Right lobe of liver (tissue), 6 donors: ENCODE measurements at regions of chr7 and their contacts with region 1.

Region 1: DNA sequence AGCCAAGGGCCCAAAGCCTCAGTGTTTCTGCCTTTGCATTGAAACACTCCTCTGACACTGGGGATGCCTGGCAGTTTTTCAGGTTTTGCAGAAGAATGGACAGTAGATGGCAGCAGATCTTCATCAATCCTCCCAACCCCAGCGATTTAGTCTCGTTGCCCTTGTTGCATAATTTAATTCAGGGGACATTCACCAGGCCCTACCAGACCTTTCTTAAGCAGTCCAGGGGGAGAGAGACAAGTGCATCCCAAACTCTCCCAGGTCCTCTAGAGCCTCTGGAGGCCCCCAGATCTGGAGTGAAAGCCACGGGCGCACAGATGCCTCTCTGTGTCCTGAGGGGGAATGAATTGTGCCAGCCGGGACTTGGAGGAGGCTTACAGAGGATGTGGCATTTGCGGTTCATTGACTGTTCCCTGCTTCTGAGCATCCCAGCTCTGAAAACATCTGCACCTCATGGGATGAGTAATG is 29.6 kb downstream of the MINDY4 start:
- DNase-seq: peak in 1 of 3 donors; percentile 60
- ATAC-seq: peak; percentile 86 to 96 (median 90)
- H3K4me3 ChIP-seq: no peak overlapping the region
- H3K27ac ChIP-seq: no peak overlapping the region
- H3K4me1 ChIP-seq: peaks cover 0 to 13% (median 3%) of the 10 kb centered on the region in 4 donors
- H3K27me3 ChIP-seq: no peaks in the 10 kb centered on the region
- CTCF ChIP-seq: peak; percentile 62 to 78 (median 69)
- POLR2A ChIP-seq: no peak

Region 2: DNA sequence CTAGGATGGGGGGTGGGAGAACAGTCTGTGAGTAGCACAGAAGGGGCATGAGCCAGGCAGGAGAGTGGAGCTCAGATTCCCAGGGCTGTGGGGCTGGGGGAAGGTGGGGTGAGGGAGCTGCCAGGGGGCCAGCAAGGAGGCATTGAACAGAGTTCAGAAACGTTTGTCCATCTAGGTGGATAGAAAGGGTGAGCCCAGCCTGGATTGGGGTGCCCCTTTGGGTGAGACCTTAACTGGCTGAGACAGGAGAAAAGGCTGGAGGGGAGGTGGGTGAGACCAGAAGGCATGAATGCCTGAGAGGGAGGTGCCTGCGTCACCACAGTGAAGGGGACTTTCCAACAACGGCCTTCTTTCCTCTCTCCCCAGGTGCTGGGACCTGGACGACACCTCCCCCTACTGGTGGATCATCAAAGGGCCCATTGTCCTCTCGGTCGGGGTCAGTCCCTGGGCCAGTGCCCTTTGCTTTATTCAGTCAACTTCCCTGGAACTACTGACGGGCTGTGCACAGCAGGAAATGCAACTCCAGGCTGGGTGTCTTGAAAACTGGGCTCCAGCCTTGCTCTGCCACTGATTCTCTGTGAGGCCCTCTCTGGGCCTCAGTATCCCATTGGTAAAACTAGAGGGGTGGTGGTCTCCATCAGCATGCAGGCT is 173.9 kb after region 1 on chr7:
- intact Hi-C with region 1: loop called (anchors 5 kb)
- DNase-seq: peak in 2 of 3 donors; percentile 73 to 74
- ATAC-seq: peak; percentile 84 to 97 (median 89)
- H3K4me3 ChIP-seq: no peak overlapping the region
- H3K27ac ChIP-seq: no peak overlapping the region
- H3K4me1 ChIP-seq: no peaks in the 10 kb centered on the region
- H3K27me3 ChIP-seq: no peaks in the 10 kb centered on the region
- CTCF ChIP-seq: peak; percentile 64 to 79 (median 78)
- POLR2A ChIP-seq: no peak